ENCODE measurements at regions of chr7 and their contacts with region 1.

Region 1: GRCh38 chr7:82481499-82482097 is 38.0 kb upstream of the CACNA2D1 start:
- DNase-seq: no peak
- ATAC-seq: no peak
- H3K4me3 ChIP-seq: no peak overlapping the region
- H3K27ac ChIP-seq: no peak overlapping the region
- H3K4me1 ChIP-seq: no peaks in the 10 kb centered on the region
- H3K27me3 ChIP-seq: no peaks in the 10 kb centered on the region

Region 2: GRCh38 chr7:82044497-82045080 is 437.0 kb before region 1 on chr7:
- intact Hi-C with region 1: loop called in 1 of 4 experiments (anchors 10 kb)
- DNase-seq: peak; percentile 10 to 51 (median 14)
- ATAC-seq: peak; percentile 24 to 41
- H3K4me3 ChIP-seq: no peak overlapping the region
- H3K27ac ChIP-seq: no peak overlapping the region
- H3K4me1 ChIP-seq: no peaks in the 10 kb centered on the region
- H3K27me3 ChIP-seq: no peaks in the 10 kb centered on the region

Region 3: DNA sequence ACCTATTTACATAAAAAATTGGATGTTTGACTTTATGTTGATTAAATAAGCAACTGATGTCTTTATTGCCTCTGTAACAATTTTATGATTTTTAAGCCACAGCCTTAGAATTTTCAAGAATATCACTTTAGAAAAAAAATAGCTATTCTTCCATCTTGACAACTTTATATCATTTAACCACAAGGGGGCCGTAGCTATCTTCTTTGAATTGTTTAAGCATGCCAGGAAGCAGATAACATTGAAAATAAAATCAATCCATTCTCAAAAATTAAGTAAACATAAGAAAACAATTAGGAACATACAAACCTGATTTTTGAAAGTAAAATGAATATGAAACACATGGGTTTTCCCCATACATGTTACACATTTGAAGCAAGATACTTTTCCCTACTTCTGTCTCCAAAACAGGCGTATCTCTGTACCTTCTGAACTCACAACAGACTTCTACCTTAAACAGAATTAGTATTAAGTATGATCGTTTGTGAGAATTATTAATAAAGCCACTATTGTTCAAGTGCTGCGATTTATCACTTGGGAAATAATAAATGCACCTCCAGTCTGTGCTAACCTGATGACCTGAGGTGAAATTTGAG is 247.0 kb before region 1 on chr7:
- intact Hi-C with region 1: loop called in 2 of 4 experiments (anchors 10 kb)
- DNase-seq: no peak
- ATAC-seq: no peak
- H3K4me3 ChIP-seq: no peak overlapping the region
- H3K27ac ChIP-seq: no peak overlapping the region
- H3K4me1 ChIP-seq: no peaks in the 10 kb centered on the region
- H3K27me3 ChIP-seq: no peaks in the 10 kb centered on the region

Region 4: GRCh38 chr7:82384051-82384464 is 97.5 kb before region 1 on chr7:
- intact Hi-C with region 1: no loop called
- DNase-seq: no peak
- ATAC-seq: no peak
- H3K4me3 ChIP-seq: no peak overlapping the region
- H3K27ac ChIP-seq: no peak overlapping the region
- H3K4me1 ChIP-seq: peaks cover 3% of the 10 kb centered on the region
- H3K27me3 ChIP-seq: no peaks in the 10 kb centered on the region

Region 5: DNA sequence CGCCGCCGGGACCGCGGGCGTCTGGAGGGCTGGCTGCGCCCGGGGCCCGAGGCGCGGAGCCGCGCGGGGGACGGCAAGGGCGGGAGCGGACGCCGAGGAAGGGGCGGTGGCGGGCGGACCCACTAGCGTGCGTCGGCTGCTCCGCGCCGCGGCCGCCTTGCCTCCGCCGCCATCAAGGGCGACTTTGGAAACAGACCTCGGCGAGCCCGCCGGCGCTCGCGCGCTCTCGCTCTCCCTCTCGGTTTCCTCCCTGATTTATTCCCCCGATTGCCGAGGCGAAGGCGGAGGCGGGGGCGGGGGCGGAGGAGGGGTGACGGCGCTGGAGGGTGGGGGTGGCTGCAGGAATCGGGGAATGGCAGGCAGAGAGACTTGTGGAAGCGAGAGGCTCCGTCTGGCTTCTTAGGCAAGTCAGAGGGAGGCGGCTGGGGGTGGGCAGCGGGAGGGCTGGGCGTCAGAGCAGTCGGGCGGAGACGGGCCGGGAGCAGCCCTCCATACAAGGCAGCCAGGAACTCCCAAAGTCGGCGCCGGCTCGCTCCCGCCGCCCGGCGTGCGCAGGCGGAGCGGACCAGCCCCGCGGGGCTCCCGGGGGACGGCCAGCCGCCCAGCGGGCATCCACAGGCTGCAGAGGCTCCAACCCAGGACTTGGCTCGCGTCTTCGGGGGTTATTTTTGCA is 37.9 kb before region 1 on chr7 and contains the start of gene CACNA2D1:
- intact Hi-C with region 1: no loop called
- DNase-seq: peak; percentile 90 to 95 (median 95)
- ATAC-seq: peak; percentile 98
- H3K4me3 ChIP-seq: peak within 1 kb of the TSS; percentile 72
- H3K27ac ChIP-seq: peak within 1 kb of the TSS; percentile 77
- H3K4me1 ChIP-seq: no peaks in the 10 kb centered on the region
- H3K27me3 ChIP-seq: no peaks in the 10 kb centered on the region
- total RNA-seq, gene CACNA2D1: 33.7 to 55.2 (median 46.3) TPM

Measured in right cardiac atrium (tissue), 5 donors.